ENCODE measurements at regions of chr12 and their contacts with region 1.

Region 1: GRCh38 chr12:14167005-14167628 is 185.7 kb upstream of the GRIN2B start:
- DNase-seq: no peak
- H3K4me3 ChIP-seq: no peak overlapping the region
- CTCF ChIP-seq: peak; percentile 79

Region 2: DNA sequence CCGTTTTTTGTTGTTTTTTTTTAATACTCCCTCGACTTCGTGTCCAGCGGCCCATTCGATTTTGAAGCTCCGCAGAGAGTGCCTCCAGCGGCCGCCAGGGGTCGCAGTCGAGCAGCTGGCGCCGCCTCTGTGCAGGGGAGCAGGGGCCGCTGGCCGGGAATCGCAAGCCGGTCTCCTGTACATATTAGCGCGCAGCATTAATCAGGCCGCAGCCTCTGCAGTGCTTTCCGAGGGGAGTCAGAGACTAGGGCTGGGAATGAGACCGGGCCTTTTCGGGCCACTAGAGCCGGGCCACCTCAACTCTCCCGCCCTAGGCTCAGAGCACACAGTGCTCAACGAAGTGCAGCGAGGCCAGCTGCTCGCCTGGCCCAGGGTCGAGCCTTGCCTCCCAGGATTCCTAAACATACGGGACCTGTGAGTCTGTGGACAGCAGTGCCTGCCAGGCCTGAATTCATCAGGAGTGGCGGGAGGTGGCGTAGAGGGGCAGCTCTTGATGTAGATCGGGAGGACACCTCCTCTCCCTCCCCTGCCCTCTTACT is 888.8 kb before region 1 on chr12:
- CTCF ChIA-PET with region 1: interaction called, 11 read pairs
- POLR2A ChIA-PET with region 1: no interaction called
- DNase-seq: no peak
- H3K4me3 ChIP-seq: no peak overlapping the region
- CTCF ChIP-seq: peak; percentile 96

Region 3: GRCh38 chr12:13740150-13740547 is 427.0 kb before region 1 on chr12:
- CTCF ChIA-PET with region 1: interaction called, 20 read pairs
- POLR2A ChIA-PET with region 1: no interaction called
- DNase-seq: no peak
- H3K4me3 ChIP-seq: no peak overlapping the region
- CTCF ChIP-seq: no peak

Region 4: DNA sequence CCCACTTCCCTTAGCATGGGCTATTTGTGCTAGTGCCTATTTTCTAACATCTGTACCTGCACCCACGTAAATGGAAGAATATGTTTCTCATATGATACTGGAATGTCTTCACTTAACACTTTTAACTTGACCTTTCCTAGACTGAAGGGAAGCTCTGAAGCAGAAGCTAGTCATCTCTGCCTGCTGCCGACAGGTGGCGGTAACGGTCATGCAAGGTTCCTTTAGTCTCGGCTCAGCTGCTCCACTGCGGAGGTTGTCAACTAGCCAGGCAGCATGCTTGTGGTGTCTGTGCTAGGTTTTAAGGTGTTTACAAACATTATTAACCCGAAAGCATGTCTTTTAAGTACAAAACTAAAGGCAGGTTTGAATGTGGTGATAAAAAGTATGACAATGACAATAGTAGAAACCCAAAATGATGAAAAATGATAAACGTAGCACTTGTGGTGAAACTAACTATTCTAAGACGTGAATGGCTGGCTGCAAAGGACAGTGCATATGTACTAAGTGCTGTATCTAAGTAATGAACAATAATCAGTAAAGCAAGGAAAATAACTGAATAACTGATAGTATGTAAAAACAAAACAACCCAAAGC is 302.9 kb before region 1 on chr12:
- CTCF ChIA-PET with region 1: interaction called, 20 read pairs
- POLR2A ChIA-PET with region 1: no interaction called
- DNase-seq: peak; percentile 5
- H3K4me3 ChIP-seq: no peak overlapping the region
- CTCF ChIP-seq: peak; percentile 94

Region 5: DNA sequence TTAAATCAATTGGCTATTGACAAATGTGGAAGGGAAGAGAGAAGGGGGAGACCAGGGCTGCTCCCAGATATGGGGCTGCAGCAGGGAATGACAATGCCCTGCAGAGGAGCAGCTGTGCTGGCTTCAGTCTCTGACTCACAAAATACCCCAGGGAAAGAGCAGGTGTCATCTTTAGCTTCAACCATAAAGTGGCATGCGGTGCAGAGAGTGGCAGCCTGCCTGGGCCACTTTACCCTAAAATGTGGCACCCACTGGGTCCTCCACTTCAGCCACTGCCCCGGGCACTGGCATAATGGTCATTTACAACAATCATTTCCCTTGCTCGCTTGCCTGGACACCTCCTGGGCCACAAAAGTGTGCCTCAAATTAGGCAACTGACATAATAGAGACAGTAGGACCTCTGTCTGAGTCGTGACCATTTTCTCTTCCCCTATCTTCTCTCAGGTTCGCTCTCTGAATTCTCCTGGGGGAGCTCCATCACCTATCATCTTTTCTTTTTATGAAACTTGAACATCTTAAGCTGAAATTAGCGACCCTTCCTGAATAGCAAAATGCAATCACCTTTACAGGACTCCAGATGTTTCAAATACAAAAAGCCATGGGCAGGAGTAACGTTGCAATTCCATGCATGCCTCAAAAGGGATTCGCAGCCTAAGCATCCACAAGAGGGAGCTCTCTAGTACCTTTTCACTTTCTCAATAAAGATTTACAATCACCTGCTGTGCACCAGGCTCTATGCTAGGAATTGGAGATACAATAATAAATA is 18.5 kb after region 1 on chr12:
- CTCF ChIA-PET with region 1: interaction called, 32 read pairs
- POLR2A ChIA-PET with region 1: no interaction called
- DNase-seq: no peak
- H3K4me3 ChIP-seq: no peak overlapping the region
- CTCF ChIP-seq: peak; percentile 63

Measured in AG04449 (cell line).